ENCODE measurements at regions of chr9 and their contacts with region 1.

Region 1: DNA sequence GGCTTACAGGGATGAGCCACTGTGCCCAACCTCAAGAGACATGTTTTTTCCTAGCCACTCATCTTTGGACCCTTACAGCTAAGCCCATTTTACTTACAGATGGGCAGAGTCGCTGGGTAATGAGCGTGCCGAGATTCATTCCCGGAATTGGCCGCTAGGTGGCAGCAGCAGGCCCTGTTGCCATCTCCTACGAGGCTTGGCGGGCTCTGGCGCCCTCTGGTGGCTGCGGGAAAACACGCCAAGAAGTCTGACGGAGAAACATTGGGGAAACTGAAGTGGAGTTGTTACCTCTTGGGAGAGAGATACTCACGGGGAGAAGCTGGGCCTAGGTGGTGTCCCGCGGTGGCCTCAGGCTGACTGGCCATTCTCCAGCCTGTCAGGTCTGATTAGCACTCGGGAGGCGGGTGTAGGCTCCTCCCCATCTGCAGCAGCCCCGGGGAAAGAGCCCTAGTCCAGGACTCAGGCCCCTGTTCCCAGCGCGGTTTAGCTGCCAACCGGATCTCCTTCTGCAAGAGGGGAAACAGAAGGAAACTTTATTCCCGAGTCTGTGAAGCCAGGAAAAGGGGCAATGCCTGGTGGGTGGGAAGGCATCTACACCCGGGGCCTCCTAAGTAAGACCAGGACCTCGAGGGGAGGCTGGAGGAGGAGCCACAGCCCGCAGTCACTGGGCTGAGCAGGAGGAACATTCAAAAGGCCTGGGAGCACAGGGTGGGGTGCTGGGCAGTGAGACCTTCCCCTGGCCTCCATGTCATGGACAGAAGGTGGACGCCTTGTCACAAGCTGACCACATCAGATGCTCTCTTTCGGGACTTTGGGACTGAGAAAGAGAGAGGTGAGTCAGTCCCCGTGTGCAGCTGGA is 9.7 kb downstream of the PTGES2 start:
- DNase-seq: peak; percentile 91 to 94
- H3K4me3 ChIP-seq: no peak overlapping the region
- H3K4me3 Mint-ChIP-seq: peak overlapping the region; percentile 18
- H3K27ac Mint-ChIP-seq: no peak overlapping the region
- H3K4me1 ChIP-seq: peaks cover 28% of the 10 kb centered on the region
- H3K4me1 Mint-ChIP-seq: peaks cover 15% of the 10 kb centered on the region
- H3K27me3 ChIP-seq: no peaks in the 10 kb centered on the region
- H3K27me3 Mint-ChIP-seq: no peaks in the 10 kb centered on the region
- CTCF ChIP-seq: peak; percentile 100

Region 2: DNA sequence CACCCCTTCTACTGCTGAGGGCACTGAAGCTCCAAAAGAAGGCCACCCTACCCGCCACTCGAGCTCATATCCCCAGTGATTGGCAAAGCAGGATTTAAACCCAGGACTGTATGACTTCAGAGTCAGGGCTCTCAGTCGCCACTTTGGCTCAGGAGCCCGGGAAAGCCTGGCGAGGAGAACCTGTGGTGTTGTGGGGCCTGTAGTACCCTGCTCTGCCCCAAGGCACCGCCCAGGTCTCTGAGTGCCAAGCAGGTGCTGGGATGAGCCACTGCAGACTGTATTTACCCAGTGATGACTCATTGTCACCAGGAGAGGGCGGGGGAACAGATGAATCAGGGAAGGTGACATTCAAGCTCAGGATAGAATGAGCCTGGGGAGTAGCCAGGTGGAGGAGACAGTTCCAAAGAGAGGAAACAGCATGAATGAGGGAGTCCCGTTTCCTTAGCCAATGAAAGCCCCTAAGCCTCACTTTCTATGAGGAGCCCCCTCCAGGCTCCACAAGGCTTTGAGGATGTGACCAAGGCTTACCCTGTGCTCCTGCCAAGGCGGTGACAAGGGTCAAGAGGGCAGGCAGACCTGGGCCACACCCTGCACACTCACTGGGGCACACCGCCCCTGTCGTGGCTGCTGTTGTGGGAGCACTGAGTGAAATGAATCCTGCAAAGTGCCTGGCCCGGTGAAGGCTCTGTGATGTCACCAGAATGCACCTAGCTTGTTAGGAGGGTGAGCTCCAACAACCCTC is 162.4 kb before region 1 on chr9:
- CTCF ChIA-PET with region 1: interaction called, 4 read pairs
- POLR2A ChIA-PET with region 1: interaction called, 3 read pairs
- intact Hi-C with region 1: loop called (anchors 5 kb)
- DNase-seq: peak; percentile 86 to 90
- H3K4me3 ChIP-seq: no peak overlapping the region
- H3K4me3 Mint-ChIP-seq: peak overlapping the region; percentile 58
- H3K27ac Mint-ChIP-seq: peak overlapping the region; percentile 82
- H3K4me1 ChIP-seq: peaks cover 29% of the 10 kb centered on the region
- H3K4me1 Mint-ChIP-seq: peaks cover 12% of the 10 kb centered on the region
- H3K27me3 ChIP-seq: no peaks in the 10 kb centered on the region
- H3K27me3 Mint-ChIP-seq: no peaks in the 10 kb centered on the region
- CTCF ChIP-seq: peak; percentile 64 to 75

Region 3: DNA sequence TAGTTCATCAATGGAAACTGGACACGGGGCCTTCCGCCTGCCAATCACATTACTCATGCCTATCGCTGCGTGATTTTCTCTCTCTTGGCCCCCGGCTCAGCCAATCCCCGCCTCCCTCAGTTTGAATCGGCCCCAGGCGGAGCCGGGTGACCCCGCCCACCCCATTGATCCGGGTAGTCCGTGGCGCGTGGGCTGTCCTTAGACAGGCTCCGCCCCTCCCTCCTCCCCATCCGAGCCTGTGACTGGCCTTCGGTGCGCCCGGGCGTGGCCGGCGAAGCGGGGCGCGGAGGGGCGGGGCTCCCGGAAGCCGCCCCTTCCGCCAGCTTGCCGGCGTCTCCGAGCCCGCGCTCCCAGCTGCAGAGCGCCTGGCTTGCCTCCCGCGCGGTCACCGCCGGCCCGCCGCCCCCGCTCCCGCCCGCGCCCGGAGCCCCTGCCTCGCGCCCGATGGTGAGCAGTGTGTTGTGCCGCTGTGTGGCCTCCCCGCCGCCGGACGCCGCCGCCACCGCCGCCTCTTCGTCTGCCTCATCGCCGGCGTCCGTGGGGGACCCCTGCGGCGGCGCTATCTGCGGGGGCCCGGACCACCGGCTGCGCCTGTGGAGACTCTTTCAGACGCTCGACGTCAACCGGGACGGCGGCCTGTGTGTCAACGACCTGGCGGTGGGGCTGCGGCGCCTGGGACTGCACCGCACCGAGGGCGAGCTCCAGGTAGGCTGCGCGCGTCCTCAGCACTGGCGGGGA is 49.8 kb before region 1 on chr9 and contains the start of gene SLC25A25:
- CTCF ChIA-PET with region 1: interaction called, 5 read pairs
- POLR2A ChIA-PET with region 1: interaction called, 3 read pairs
- intact Hi-C with region 1: loop called (anchors 5 kb)
- DNase-seq: peak; percentile 100
- H3K4me3 ChIP-seq: peak within 1 kb of the TSS; percentile 77
- H3K4me3 Mint-ChIP-seq: no peak within 1 kb of the TSS
- H3K27ac Mint-ChIP-seq: peak within 1 kb of the TSS; percentile 63
- H3K4me1 ChIP-seq: peaks cover 24% of the 10 kb centered on the region
- H3K4me1 Mint-ChIP-seq: peaks cover 19% of the 10 kb centered on the region
- H3K27me3 ChIP-seq: no peaks in the 10 kb centered on the region
- H3K27me3 Mint-ChIP-seq: no peaks in the 10 kb centered on the region
- CTCF ChIP-seq: no peak
- total RNA-seq, gene SLC25A25: 16.5 and 18.5 TPM in 2 replicates

Region 4: GRCh38 chr9:128098297-128099230 is 19.3 kb before region 1 on chr9:
- CTCF ChIA-PET with region 1: interaction called, 6 read pairs
- POLR2A ChIA-PET with region 1: interaction called, 5 read pairs
- intact Hi-C with region 1: loop called (anchors 1 kb)
- DNase-seq: peak; percentile 94 to 97
- H3K4me3 ChIP-seq: peak overlapping the region; percentile 67
- H3K4me3 Mint-ChIP-seq: peak overlapping the region; percentile 99
- H3K27ac Mint-ChIP-seq: peak overlapping the region; percentile 100
- H3K4me1 ChIP-seq: peaks cover 34% of the 10 kb centered on the region
- H3K4me1 Mint-ChIP-seq: peaks cover 18% of the 10 kb centered on the region
- H3K27me3 ChIP-seq: no peaks in the 10 kb centered on the region
- H3K27me3 Mint-ChIP-seq: no peaks in the 10 kb centered on the region
- CTCF ChIP-seq: no peak

Region 5: DNA sequence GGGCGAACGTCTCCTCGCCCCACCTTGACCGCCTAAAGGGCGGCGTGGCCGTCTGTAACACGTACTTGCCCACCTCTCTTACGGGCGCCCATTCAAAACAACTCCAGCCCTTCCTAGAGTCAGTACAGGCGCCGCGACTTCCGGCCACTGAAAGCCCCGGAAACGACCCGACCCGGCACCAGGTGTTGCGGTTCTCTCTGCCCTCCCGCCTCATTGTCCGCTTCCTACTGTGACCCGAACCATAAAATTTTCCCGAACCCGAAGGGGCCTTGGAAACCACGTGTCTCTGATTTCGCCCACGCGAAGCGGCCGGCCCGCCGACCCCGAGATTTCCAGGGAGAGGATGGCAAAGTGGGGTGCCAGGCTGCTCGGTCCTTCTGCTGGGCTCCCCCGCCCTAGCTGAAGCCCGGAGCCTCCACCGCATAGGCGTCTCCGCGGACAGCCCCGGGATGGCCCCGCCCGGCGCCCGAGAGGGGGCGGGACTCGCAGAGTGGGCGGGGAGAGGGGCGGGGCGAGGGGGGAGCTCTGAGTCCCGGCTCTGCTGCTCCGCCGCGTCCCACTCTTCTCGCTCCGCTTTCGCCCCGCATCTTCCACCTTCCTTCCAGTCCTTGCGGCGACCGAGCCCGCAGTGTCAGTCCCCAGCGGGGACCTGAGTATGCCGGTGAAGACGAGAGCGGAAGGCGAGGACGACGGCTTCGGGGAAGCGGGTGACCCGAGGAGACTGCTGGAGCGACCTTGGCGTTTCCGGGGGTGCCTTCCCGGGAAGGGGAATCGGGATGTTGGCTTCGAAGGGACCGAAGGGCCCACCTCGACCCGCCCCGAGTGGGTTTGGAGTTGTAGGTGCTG is 10.4 kb after region 1 on chr9:
- CTCF ChIA-PET with region 1: interaction called, 11 read pairs
- POLR2A ChIA-PET with region 1: interaction called, 4 read pairs
- intact Hi-C with region 1: no loop called
- DNase-seq: peak; percentile 89 to 90
- H3K4me3 ChIP-seq: peak overlapping the region; percentile 96
- H3K4me3 Mint-ChIP-seq: peak overlapping the region; percentile 97
- H3K27ac Mint-ChIP-seq: peak overlapping the region; percentile 100
- H3K4me1 ChIP-seq: peaks cover 9% of the 10 kb centered on the region; the same call in 1 of the 2 replicates
- H3K4me1 Mint-ChIP-seq: peaks cover 10% of the 10 kb centered on the region
- H3K27me3 ChIP-seq: no peaks in the 10 kb centered on the region
- H3K27me3 Mint-ChIP-seq: no peaks in the 10 kb centered on the region
- CTCF ChIP-seq: no peak

Region 6: GRCh38 chr9:128164307-128164885 is 46.6 kb after region 1 on chr9:
- CTCF ChIA-PET with region 1: no interaction called
- POLR2A ChIA-PET with region 1: no interaction called
- intact Hi-C with region 1: no loop called
- DNase-seq: no peak
- H3K4me3 ChIP-seq: no peak overlapping the region
- H3K4me3 Mint-ChIP-seq: no peak overlapping the region
- H3K27ac Mint-ChIP-seq: no peak overlapping the region
- H3K4me1 ChIP-seq: peaks cover 6% of the 10 kb centered on the region; the same call in 1 of the 2 replicates
- H3K4me1 Mint-ChIP-seq: no peaks in the 10 kb centered on the region
- H3K27me3 ChIP-seq: no peaks in the 10 kb centered on the region
- H3K27me3 Mint-ChIP-seq: no peaks in the 10 kb centered on the region
- CTCF ChIP-seq: no peak